K562 (cell line): ENCODE measurements at regions of chr10 and their contacts with region 1.

Region 1: GRCh38 chr10:84537447-84537931 is 209.1 kb downstream of the CCSER2 start:
- DNase-seq: peak; percentile 81 to 89 (median 88)
- ATAC-seq: peak; percentile 86
- H3K4me3 ChIP-seq: no peak overlapping the region
- H3K27ac ChIP-seq: no peak overlapping the region
- H3K4me1 ChIP-seq: peaks cover 0 to 10% of the 10 kb centered on the region in 2 experiments; a peak in 3 of 5 replicates
- H3K27me3 ChIP-seq: peaks cover 0 to 18% of the 10 kb centered on the region in 2 experiments; a peak in 2 of 5 replicates
- CTCF ChIP-seq: peak; percentile 79 to 97 (median 85)
- EP300 ChIP-seq: no peak
- POLR2A ChIP-seq: no peak
- RAD21 ChIP-seq: peak; percentile 99

Region 2: DNA sequence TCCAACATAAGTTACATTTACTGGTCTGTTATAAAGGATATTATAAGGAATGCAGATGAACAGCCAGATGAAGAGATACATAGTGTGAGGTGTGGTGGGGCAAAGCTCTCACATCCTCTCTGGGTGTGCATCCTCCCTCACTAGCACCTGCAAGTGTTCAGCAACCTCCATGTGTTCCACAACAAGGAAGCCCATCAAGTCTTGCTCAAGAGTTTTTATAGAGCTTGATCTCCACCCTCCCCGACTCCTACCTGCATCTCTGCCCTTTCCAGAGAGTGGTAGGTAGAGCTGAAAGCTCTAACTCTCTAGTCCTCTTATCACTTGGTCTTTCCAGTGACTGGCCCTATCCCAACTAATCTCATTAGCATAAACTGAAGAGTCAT is 410.7 kb before region 1 on chr10:
- CTCF ChIA-PET with region 1: no interaction called
- POLR2A ChIA-PET with region 1: no interaction called
- in situ Hi-C with region 1: no loop called
- intact Hi-C with region 1: loop called (anchors 5 kb)
- DNase-seq: no peak
- ATAC-seq: no peak
- H3K4me3 ChIP-seq: no peak overlapping the region
- H3K27ac ChIP-seq: no peak overlapping the region
- H3K4me1 ChIP-seq: no peaks in the 10 kb centered on the region
- H3K27me3 ChIP-seq: peaks cover 0 to 4% of the 10 kb centered on the region in 2 experiments; a peak in 3 of 5 replicates
- CTCF ChIP-seq: no peak
- EP300 ChIP-seq: no peak
- POLR2A ChIP-seq: no peak
- RAD21 ChIP-seq: no peak

Region 3: DNA sequence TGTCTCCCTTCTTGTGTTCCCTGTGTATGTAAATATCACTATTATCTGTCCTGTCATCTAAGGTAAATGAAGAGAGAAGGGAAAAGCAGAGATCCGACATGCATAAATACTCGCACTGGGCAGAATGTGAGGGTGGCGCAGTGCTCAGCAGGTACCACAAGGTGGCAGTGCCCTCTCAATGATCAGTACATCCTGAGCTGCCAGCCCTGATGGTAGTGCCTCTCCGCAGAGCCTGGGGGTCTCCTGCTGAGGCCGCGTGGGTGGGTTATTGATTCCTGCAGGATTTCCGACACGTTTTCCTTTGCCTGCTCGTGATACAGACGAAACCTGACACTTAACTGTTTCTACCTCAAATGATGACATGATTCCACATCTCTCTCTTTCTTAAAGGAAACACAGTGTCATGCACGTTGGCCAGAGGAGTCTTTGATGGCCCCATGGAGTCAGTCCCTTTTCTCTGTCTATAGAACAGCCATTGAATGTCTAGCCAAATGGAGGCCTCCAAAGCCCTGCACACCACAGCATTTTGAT is 272.8 kb before region 1 on chr10:
- CTCF ChIA-PET with region 1: interaction called, 97 read pairs
- POLR2A ChIA-PET with region 1: no interaction called
- in situ Hi-C with region 1: loop called (anchors 5 kb)
- intact Hi-C with region 1: loop called (anchors 1 kb)
- DNase-seq: peak; percentile 75 to 83 (median 79)
- ATAC-seq: peak; percentile 97
- H3K4me3 ChIP-seq: no peak overlapping the region
- H3K27ac ChIP-seq: no peak overlapping the region
- H3K4me1 ChIP-seq: no peaks in the 10 kb centered on the region
- H3K27me3 ChIP-seq: peaks cover 3 to 44% of the 10 kb centered on the region in 2 experiments; a peak in 2 of 5 replicates
- CTCF ChIP-seq: peak; percentile 90 to 98 (median 97)
- EP300 ChIP-seq: no peak
- POLR2A ChIP-seq: no peak
- RAD21 ChIP-seq: peak; percentile 96 to 97

Region 4: DNA sequence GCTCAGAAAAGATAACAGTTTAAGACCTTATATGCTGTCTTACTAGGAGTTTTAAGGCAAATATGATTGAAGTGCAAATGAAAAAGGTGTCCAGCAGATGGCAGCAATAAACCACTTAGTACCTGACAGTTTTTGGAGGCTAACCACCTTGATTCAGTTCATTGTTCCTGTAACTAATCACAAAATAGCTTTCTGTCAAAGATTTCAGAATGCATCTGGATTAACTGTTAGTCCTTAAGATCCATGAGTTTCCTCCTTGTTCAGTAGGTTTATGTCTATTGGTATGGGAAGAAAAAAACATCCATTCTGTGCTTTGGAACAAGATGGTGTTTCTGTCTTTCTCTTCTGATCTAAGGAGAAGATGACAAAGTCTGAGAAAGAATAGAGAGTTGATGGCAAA is 162.5 kb before region 1 on chr10:
- CTCF ChIA-PET with region 1: interaction called, 58 read pairs
- POLR2A ChIA-PET with region 1: interaction called, 3 read pairs
- in situ Hi-C with region 1: loop called (anchors 5 kb)
- intact Hi-C with region 1: loop called (anchors 1 kb)
- DNase-seq: peak; percentile 30 to 78 (median 37)
- ATAC-seq: peak; percentile 85
- H3K4me3 ChIP-seq: no peak overlapping the region
- H3K27ac ChIP-seq: no peak overlapping the region
- H3K4me1 ChIP-seq: no peaks in the 10 kb centered on the region
- H3K27me3 ChIP-seq: no peaks in the 10 kb centered on the region
- CTCF ChIP-seq: peak; percentile 59 to 91 (median 70)
- EP300 ChIP-seq: no peak
- POLR2A ChIP-seq: no peak
- RAD21 ChIP-seq: peak; percentile 96

Region 5: GRCh38 chr10:84613336-84614021 is 76.0 kb after region 1 on chr10:
- CTCF ChIA-PET with region 1: no interaction called
- POLR2A ChIA-PET with region 1: no interaction called
- in situ Hi-C with region 1: no loop called
- intact Hi-C with region 1: loop called (anchors 2 kb)
- DNase-seq: peak in 3 of 4 experiments; percentile 11 to 51 (median 33)
- ATAC-seq: peak; percentile 94
- H3K4me3 ChIP-seq: no peak overlapping the region
- H3K27ac ChIP-seq: no peak overlapping the region
- H3K4me1 ChIP-seq: no peaks in the 10 kb centered on the region
- H3K27me3 ChIP-seq: no peaks in the 10 kb centered on the region
- CTCF ChIP-seq: peak; percentile 42 to 65 (median 62)
- EP300 ChIP-seq: no peak
- POLR2A ChIP-seq: no peak
- RAD21 ChIP-seq: peak; percentile 42 to 71

Region 6: GRCh38 chr10:84715911-84716310 is 178.4 kb after region 1 on chr10:
- CTCF ChIA-PET with region 1: no interaction called
- POLR2A ChIA-PET with region 1: no interaction called
- in situ Hi-C with region 1: no loop called
- intact Hi-C with region 1: loop called (anchors 5 kb)
- DNase-seq: peak; percentile 61 to 70 (median 64)
- ATAC-seq: peak; percentile 99
- H3K4me3 ChIP-seq: no peak overlapping the region
- H3K27ac ChIP-seq: no peak overlapping the region
- H3K4me1 ChIP-seq: no peaks in the 10 kb centered on the region
- H3K27me3 ChIP-seq: no peaks in the 10 kb centered on the region
- CTCF ChIP-seq: peak; percentile 76 to 88 (median 80)
- EP300 ChIP-seq: no peak
- POLR2A ChIP-seq: no peak
- RAD21 ChIP-seq: peak in 1 of 2 experiments; percentile 56; a peak in 2 of 4 replicates

Region 7: DNA sequence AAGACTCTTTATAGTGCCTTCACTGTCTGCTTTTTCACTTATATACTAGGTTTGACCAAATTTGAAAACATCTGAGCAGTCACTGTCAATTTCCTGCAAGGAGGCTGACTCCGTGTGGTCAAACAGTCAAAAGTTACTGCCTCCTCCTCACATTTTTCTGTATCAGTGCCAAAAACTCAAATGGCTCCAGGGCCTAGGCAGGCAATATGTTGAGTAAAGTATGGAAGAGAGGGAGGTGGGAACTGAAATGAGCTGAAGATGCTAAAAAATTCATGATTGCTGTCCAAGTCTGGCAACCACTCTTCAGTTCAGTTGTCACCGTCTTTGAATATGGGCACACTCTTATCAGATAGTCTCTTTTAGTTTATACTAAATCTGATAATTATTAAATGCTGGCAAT is 342.5 kb after region 1 on chr10:
- CTCF ChIA-PET with region 1: no interaction called
- POLR2A ChIA-PET with region 1: no interaction called
- in situ Hi-C with region 1: no loop called
- intact Hi-C with region 1: no loop called
- DNase-seq: no peak
- ATAC-seq: no peak
- H3K4me3 ChIP-seq: no peak overlapping the region
- H3K27ac ChIP-seq: no peak overlapping the region
- H3K4me1 ChIP-seq: no peaks in the 10 kb centered on the region
- H3K27me3 ChIP-seq: no peaks in the 10 kb centered on the region
- CTCF ChIP-seq: no peak
- EP300 ChIP-seq: no peak
- POLR2A ChIP-seq: no peak
- RAD21 ChIP-seq: no peak